ENCODE measurements at regions of chr15 and their contacts with region 1.

Region 1: DNA sequence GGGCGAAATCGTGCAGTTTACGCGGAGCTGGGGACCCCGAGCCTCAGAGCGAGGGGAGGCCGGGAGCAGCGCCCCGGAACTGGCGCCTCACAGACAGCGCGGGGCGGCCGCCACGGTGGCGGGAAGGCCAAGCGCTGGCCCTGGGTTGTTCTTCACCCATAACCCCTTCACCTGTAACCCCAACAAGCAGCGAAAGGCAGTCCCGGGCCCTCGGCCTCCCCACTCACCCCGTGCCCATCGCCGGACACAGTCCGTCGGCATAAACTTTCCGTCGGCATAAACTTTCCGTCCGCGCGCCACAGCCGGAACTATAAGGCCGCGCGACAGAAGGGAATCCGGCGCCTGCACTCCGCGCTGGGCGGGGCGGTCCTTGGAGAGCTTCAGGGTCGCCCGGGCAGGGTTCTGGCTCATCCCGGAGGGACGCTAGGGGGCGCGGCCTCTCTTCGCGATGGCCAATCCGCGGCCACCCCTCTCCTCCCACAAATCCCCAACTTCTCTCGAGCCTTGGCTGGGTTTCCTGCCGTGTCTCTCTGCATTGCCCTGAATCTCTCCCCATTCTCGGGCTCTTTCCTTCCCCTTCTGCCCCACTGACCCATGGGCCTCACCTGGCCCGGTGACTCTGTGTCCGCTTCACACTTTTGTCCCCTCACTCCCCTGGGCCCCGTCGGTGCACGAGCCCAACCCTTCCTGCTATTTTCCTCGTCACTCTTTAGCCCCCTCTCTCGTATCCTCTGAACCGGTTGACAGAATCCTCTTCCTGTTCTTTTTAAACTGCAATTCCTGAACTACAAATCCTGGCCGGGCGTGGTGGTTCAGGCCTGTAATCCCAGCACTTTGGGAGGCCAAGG is at the start of gene INTS14:
- DNase-seq: peak; percentile 99
- total RNA-seq, gene INTS14: 19.8 to 23.3 TPM

Region 2: GRCh38 chr15:65532738-65533051 is 78.4 kb before region 1 on chr15:
- intact Hi-C with region 1: loop called in 1 of 2 experiments (anchors 2 kb)
- DNase-seq: no peak

Region 3: GRCh38 chr15:65792130-65792987 is 181.3 kb after region 1 on chr15 and contains the start of gene DENND4A:
- intact Hi-C with region 1: no loop called
- DNase-seq: peak; percentile 99
- total RNA-seq, gene DENND4A: 28.6 to 30.1 TPM

Region 4: GRCh38 chr15:66429117-66429516 is 818.0 kb after region 1 on chr15:
- intact Hi-C with region 1: loop called in 1 of 2 experiments (anchors 5 kb)
- DNase-seq: no peak

Measured in posterior vena cava (tissue), 2 donors.